ENCODE measurements at regions of chr7 and their contacts with region 1.

Region 1: DNA sequence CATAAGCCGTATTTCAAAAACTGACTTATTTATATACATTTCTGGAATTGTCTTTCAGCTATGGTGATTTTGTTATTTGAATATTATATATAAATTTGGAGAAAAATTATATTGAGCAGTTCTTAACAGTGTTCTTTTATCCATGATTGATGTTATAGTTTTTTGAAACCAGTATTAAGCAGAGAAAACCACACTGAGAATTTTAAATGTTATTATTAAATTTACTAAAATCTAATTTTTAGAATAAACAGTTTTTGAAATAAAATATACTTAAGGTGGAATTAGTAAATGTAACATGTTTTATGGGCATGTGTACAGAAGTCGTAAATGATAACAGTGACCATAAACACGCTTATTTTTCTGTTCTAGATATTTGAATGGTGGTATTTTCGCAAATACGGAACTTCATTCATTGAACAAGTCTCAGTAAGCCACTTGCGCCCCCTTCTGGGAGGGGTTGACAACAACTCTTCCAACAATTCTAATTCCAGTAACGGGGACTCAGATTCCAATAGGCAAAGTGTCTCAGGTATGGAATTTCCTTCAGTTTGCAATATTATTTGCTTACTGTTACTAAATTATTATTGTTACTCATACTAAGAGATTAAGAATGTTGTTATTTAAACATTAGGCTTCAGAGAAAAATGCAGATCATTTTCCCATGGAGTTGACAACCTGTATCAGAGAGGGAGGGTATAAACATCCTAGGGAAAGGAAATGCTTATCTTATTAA is 166.1 kb downstream of the ST7 start:
- DNase-seq: peak; percentile 59 to 94 (median 85)

Region 2: DNA sequence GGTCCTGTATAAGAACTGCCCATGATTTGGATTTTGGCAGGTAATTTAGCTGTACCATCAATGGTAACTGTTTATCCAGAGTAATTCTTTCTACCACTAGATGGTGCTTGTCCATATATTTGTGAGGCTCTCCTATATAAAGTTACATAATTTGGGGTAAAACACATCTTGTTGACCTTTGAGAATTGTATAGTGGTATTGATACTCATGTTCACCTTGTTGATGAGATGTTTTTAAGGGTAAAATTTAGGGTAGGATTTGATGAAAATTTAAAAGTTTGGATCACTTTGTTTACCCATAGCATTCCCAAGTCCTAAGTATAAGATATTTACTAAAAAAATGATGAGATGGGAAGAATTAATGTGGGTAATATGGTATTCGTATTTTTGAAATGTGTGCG is 134.4 kb before region 1 on chr7:
- intact Hi-C with region 1: loop called (anchors 5 kb)
- DNase-seq: no peak